ENCODE measurements at regions of chr2 and their contacts with region 1.

Region 1: GRCh38 chr2:46451131-46451711 is 28.1 kb upstream of the TMEM247 start:
- DNase-seq: no peak
- H3K4me3 ChIP-seq: no peak overlapping the region
- H3K27ac ChIP-seq: no peak overlapping the region
- H3K4me1 ChIP-seq: peaks cover 19% of the 10 kb centered on the region
- H3K27me3 ChIP-seq: no peaks in the 10 kb centered on the region
- CTCF ChIP-seq: no peak

Region 2: DNA sequence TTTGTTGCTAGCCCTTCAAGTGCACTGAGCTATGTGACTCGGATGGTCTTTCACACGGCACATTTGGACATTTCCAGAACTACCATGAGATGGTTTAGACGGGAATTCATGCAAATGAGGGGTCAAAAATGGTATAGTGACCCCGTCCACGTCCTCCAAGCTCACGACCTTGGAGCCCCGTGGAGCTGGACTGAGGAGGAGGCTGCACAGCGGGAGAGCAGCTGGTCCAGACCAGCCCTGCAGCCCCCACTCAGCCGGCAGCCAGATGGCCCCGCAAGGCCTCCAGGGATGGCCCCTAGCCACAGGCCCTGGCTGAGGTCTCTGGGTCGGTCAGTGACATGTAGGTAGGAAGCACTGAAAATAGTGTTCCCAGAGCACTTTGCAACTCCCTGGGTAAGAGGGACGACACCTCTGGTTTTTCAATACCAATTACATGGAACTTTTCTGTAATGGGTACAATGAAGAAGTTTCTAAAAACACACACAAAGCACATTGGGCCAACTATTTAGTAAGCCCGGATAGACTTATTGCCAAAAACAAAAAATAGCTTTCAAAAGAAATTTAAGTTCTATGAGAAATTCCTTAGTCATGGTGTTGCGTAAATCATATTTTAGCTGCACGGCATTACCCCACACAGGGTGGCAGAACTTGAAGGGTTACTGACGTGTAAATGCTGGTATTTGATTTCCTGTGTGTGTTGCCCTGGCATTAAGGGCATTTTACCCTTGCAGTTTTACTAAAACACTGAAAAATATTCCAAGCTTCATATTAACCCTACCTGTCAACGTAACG is 65.2 kb before region 1 on chr2:
- CTCF ChIA-PET with region 1: interaction called, 13 read pairs
- POLR2A ChIA-PET with region 1: no interaction called
- intact Hi-C with region 1: no loop called
- DNase-seq: peak in 1 of 2 experiments; percentile 85
- H3K4me3 ChIP-seq: peak overlapping the region; percentile 3; the same call in 1 of the 2 replicates
- H3K27ac ChIP-seq: peak overlapping the region; percentile 81
- H3K4me1 ChIP-seq: peaks cover 32% of the 10 kb centered on the region
- H3K27me3 ChIP-seq: no peaks in the 10 kb centered on the region
- CTCF ChIP-seq: no peak

Region 3: DNA sequence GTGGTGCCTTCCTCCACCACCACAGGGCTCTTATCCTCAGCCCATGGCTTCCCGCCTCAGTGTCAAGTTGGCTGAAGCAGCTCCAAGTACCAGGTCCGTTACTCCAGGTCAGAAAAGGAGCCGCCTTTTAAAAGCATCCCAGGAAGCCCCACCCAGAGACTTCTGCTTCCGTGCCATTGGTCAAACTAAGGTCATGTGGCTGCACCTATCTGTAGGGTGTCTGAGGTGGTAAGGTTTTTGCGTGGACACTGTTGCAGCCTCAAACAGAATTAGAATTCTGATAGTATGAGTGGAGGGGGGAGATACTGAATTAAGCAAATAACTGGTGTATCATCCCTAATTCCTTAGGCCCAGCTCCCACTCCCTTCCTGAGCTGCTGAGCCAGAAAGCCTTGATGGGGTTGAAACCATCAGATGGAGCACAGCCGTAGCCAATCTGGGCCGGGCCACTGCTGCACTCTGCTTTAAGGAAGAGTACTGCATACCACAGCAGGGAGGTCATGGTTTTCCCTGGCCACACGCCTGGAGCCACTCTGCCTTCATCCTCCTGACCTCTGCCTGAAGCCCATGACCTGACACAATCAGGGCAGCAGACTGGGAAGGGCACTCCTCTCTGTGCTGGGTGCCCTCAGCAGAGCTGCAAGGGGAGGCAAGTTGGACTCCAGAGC is 36.6 kb after region 1 on chr2:
- CTCF ChIA-PET with region 1: no interaction called
- POLR2A ChIA-PET with region 1: no interaction called
- intact Hi-C with region 1: no loop called
- DNase-seq: peak; percentile 57 to 67
- H3K4me3 ChIP-seq: no peak overlapping the region
- H3K27ac ChIP-seq: no peak overlapping the region
- H3K4me1 ChIP-seq: peaks cover 8% of the 10 kb centered on the region
- H3K27me3 ChIP-seq: no peaks in the 10 kb centered on the region
- CTCF ChIP-seq: no peak

Region 4: GRCh38 chr2:46793423-46794416 is 342.5 kb after region 1 on chr2:
- CTCF ChIA-PET with region 1: no interaction called
- POLR2A ChIA-PET with region 1: no interaction called
- intact Hi-C with region 1: no loop called
- DNase-seq: no peak
- H3K4me3 ChIP-seq: no peak overlapping the region
- H3K27ac ChIP-seq: no peak overlapping the region
- H3K4me1 ChIP-seq: no peaks in the 10 kb centered on the region
- H3K27me3 ChIP-seq: no peaks in the 10 kb centered on the region
- CTCF ChIP-seq: no peak

Region 5: DNA sequence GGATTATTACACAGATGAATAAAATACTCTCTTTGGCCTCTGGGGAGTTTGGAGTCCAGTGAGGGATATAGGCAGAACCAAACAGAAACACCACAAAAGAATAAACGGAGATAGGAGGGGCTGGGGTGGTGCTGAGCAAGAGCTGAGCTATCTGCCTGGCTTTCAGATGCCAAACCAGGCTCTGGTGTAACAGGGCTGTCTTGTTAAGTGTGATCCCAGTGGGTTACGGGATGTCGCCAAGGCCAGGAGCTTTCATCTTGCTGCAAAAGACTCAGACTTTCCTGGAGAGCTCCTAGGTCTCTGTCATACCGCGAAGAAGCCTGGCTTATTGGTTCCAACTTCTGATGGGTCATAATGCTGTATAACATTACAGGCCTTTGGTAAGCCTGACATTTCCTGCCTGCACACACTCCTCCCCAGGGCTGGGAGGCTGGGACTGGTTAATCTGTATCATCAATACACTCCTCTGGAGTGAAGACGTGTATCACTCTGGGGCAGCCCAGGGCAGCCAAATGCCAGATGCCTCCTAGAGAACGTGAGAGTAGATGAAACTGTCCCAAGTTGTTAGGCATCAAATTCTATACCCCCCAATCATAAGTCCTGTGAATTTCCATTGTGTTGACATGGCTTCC is 643.4 kb after region 1 on chr2:
- CTCF ChIA-PET with region 1: no interaction called
- POLR2A ChIA-PET with region 1: no interaction called
- intact Hi-C with region 1: no loop called
- DNase-seq: no peak
- H3K4me3 ChIP-seq: no peak overlapping the region
- H3K27ac ChIP-seq: no peak overlapping the region
- H3K4me1 ChIP-seq: peaks cover 10% of the 10 kb centered on the region
- H3K27me3 ChIP-seq: no peaks in the 10 kb centered on the region
- CTCF ChIP-seq: no peak

Measured in PC-9 (cell line).